Transverse colon (tissue), 4 donors: ENCODE measurements at regions of chr19 and their contacts with region 1.

Region 1: DNA sequence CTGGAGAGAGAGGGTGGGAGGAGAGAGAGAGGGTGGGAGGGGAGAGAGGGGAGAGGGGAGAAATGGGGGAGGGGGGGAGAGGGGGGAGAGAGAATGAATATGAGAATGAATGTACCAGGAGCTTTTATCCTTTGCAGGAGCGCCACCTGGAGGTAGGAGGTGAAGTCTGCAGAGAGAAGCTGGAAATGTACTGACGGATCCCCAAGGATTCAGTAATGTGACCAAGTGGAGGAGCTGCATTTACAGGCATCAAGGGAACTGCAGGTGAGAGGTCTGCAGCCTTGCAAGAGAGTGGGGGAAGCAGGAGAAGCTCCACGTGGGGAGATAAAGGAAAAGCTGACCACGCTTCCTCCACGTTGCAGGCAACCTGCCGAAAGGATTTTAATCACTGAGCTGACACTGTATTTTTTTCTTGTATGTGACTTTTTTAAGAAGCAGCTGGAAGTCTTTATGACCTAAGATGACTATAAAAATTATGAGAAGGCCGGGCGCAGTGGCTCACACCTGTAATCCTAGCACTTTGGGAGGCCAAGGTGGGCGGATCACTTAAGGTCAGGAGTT is 33.7 kb downstream of the VSTM1 start:
- DNase-seq: peak; percentile 53
- H3K4me3 ChIP-seq: no peak overlapping the region
- H3K27ac ChIP-seq: no peak overlapping the region
- H3K4me1 ChIP-seq: no peaks in the 10 kb centered on the region
- H3K27me3 ChIP-seq: peaks cover 28% of the 10 kb centered on the region
- CTCF ChIP-seq: peak; percentile 21 to 66 (median 47)
- EP300 ChIP-seq: no peak
- POLR2A ChIP-seq: no peak

Region 2: DNA sequence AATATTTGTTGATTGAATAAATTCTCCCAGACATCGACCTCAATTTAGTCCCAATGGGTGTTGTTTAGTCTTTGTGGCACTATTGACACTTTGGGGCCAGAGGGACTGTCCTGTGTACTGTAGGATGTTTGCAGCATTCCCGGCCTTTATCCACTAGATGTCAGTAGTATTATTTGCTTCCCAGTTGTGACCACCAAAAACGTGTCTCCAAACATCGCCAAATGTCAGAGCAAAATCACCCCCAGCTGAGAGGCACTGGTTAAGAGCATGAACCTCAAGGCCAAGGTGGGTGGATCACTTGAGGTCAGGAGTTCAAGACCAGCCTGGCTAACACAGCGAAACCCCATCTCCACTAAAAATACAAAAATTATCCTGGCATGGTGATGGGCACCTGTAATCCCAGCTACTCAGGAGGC is 221.3 kb before region 1 on chr19:
- in situ Hi-C with region 1: loop called in 2 of 4 experiments (anchors 25 kb)
- intact Hi-C with region 1: no loop called
- DNase-seq: no peak
- H3K4me3 ChIP-seq: no peak overlapping the region
- H3K27ac ChIP-seq: no peak overlapping the region
- H3K4me1 ChIP-seq: no peaks in the 10 kb centered on the region
- H3K27me3 ChIP-seq: no peaks in the 10 kb centered on the region
- CTCF ChIP-seq: peak in 2 of 5 experiments; percentile 10 to 16
- EP300 ChIP-seq: no peak
- POLR2A ChIP-seq: no peak

Region 3: DNA sequence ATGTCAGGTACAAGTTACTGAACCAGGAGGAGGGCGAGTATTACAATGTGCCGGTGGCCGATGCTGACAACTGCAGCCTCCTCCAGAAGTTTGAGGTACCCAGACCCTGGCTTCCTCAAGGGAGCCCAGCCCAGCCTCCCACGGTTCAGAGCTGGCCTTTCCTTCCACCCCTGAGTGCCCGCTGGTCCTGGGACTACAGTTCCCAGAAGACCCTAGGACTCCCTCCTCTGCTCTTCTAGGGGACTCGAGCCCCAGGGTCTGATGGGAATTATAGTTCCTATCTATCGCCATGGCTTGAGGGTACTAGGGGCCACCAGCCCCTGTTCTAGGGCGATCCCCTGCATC is 137.1 kb before region 1 on chr19:
- in situ Hi-C with region 1: loop called in 1 of 4 experiments (anchors 10 kb)
- intact Hi-C with region 1: no loop called
- DNase-seq: no peak
- H3K4me3 ChIP-seq: no peak overlapping the region
- H3K27ac ChIP-seq: no peak overlapping the region
- H3K4me1 ChIP-seq: peaks cover 0 to 9% (median 6%) of the 10 kb centered on the region in 4 donors
- H3K27me3 ChIP-seq: peaks cover 67% of the 10 kb centered on the region
- CTCF ChIP-seq: no peak
- EP300 ChIP-seq: no peak
- POLR2A ChIP-seq: no peak

Region 4: DNA sequence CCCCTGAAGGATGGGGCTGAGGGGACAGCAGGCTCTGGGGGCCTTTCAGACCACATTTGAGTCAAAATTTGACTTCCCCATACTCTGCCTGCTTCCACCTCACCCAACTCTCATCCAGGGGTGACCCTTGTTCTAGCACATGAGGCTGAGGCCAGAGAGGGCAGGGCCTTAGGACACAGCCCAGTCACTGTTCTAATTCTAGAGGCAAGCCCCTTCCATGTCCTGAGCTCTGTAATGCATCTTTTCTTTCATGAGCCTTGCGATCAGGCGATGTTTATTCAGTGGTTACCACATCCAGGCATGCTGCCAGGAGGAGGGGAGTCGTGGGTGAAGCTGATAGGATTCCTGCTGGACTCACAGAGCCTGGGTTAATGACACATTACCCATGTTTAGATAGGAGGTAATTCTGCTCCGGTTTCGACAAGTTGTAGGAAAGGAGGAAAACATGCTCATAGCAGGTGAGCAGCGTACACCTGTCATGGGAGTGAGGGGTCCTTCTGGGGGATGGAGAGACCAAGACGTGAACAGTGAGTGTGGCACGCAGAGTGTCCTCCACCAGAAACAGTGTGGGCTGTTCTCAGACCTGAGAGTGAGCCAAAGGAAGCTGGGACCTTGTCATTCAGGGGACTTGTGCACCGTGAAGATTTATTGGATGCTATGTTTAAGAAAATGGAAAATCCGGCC is 179.9 kb after region 1 on chr19:
- in situ Hi-C with region 1: no loop called
- intact Hi-C with region 1: no loop called
- DNase-seq: peak; percentile 93
- H3K4me3 ChIP-seq: no peak overlapping the region
- H3K27ac ChIP-seq: peak overlapping the region; percentile 84 to 90 (median 84)
- H3K4me1 ChIP-seq: peaks cover 31 to 64% (median 45%) of the 10 kb centered on the region in 4 donors
- H3K27me3 ChIP-seq: no peaks in the 10 kb centered on the region
- CTCF ChIP-seq: no peak
- EP300 ChIP-seq: no peak
- POLR2A ChIP-seq: peak; percentile 34